Naive thymus-derived CD4-positive, alpha-beta T cell (primary cell): ENCODE measurements at regions of chr17 and their contacts with region 1.

Region 1: GRCh38 chr17:39401412-39402243 is at the start of gene FBXL20:
- DNase-seq: peak; percentile 85 to 94 (median 91)
- ATAC-seq: peak; percentile 89
- H3K4me3 ChIP-seq: peak within 1 kb of the TSS; percentile 84
- H3K4me3 Mint-ChIP-seq: peak within 1 kb of the TSS; percentile 93 to 99 (median 98)
- H3K27ac ChIP-seq: peak within 1 kb of the TSS; percentile 90
- H3K27ac Mint-ChIP-seq: peak within 1 kb of the TSS; percentile 86 to 99 (median 96)
- H3K4me1 ChIP-seq: peaks cover 6 to 13% of the 10 kb centered on the region in 2 donors
- H3K4me1 Mint-ChIP-seq: peaks cover 18 to 56% (median 44%) of the 10 kb centered on the region in 7 donors
- H3K27me3 ChIP-seq: no peaks in the 10 kb centered on the region
- H3K27me3 Mint-ChIP-seq: no peaks in the 10 kb centered on the region
- total RNA-seq, gene FBXL20: 17.6 to 35.0 (median 26.1) TPM

Region 2: GRCh38 chr17:39450847-39451581 is 49.4 kb after region 1 on chr17 and contains the start of gene MED1:
- CTCF ChIA-PET with region 1: no interaction called
- POLR2A ChIA-PET with region 1: interaction called, 9 read pairs
- intact Hi-C with region 1: loop called (anchors 1 kb)
- DNase-seq: peak; percentile 77 to 94 (median 89)
- ATAC-seq: peak; percentile 95
- H3K4me3 ChIP-seq: peak within 1 kb of the TSS; percentile 98
- H3K4me3 Mint-ChIP-seq: peak within 1 kb of the TSS; percentile 92 to 98 (median 96)
- H3K27ac ChIP-seq: peak within 1 kb of the TSS; percentile 85
- H3K27ac Mint-ChIP-seq: peak within 1 kb of the TSS; percentile 96 to 100 (median 99)
- H3K4me1 ChIP-seq: peaks cover 8 to 12% of the 10 kb centered on the region in 2 donors
- H3K4me1 Mint-ChIP-seq: peaks cover 7 to 38% (median 29%) of the 10 kb centered on the region in 7 donors
- H3K27me3 ChIP-seq: no peaks in the 10 kb centered on the region
- H3K27me3 Mint-ChIP-seq: no peaks in the 10 kb centered on the region
- total RNA-seq, gene MED1: 37.3 to 61.5 (median 56.0) TPM

Region 3: DNA sequence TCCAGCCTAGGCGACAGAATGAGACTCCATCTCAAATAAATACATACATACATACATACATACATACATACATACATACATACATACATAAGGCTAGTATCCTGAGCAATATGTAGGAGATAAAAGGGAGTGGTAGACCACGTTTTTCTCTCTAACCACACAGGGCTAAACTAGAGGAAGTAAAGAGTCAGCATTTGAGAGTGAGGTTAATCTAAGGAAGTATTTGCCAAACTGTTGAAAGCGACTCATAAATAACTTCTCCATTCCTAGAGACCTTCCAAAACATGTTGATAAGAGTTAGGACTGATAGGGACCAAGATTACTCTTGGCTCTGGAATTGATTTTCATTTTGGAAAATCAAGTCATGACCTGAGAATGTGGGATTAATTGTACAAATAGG is 137.2 kb after region 1 on chr17:
- CTCF ChIA-PET with region 1: no interaction called
- POLR2A ChIA-PET with region 1: no interaction called
- intact Hi-C with region 1: no loop called
- DNase-seq: peak in 2 of 9 donors; percentile 12
- ATAC-seq: peak; percentile 86
- H3K4me3 ChIP-seq: no peak overlapping the region
- H3K4me3 Mint-ChIP-seq: peak overlapping the region in 1 of 10 donors; percentile 9
- H3K27ac ChIP-seq: no peak overlapping the region
- H3K27ac Mint-ChIP-seq: peak overlapping the region in 2 of 9 donors; percentile 7 to 40
- H3K4me1 ChIP-seq: peaks cover 0 to 6% of the 10 kb centered on the region in 2 donors
- H3K4me1 Mint-ChIP-seq: peaks cover 18 to 26% (median 20%) of the 10 kb centered on the region in 7 donors
- H3K27me3 ChIP-seq: no peaks in the 10 kb centered on the region
- H3K27me3 Mint-ChIP-seq: no peaks in the 10 kb centered on the region